Activated naive CD4-positive, alpha-beta T cell treated with anti-CD3 and anti-CD28 coated beads for 36 hours (primary cell): ENCODE measurements at regions of chr11 and their contacts with region 1.

Region 1: GRCh38 chr11:1652771-1653540 is 23.4 kb downstream of the KRTAP5-5 start:
- DNase-seq: peak; percentile 74
- H3K4me3 Mint-ChIP-seq: no peak overlapping the region
- H3K27ac Mint-ChIP-seq: no peak overlapping the region
- H3K4me1 Mint-ChIP-seq: no peaks in the 10 kb centered on the region
- H3K27me3 Mint-ChIP-seq: peaks cover 9% of the 10 kb centered on the region

Region 2: DNA sequence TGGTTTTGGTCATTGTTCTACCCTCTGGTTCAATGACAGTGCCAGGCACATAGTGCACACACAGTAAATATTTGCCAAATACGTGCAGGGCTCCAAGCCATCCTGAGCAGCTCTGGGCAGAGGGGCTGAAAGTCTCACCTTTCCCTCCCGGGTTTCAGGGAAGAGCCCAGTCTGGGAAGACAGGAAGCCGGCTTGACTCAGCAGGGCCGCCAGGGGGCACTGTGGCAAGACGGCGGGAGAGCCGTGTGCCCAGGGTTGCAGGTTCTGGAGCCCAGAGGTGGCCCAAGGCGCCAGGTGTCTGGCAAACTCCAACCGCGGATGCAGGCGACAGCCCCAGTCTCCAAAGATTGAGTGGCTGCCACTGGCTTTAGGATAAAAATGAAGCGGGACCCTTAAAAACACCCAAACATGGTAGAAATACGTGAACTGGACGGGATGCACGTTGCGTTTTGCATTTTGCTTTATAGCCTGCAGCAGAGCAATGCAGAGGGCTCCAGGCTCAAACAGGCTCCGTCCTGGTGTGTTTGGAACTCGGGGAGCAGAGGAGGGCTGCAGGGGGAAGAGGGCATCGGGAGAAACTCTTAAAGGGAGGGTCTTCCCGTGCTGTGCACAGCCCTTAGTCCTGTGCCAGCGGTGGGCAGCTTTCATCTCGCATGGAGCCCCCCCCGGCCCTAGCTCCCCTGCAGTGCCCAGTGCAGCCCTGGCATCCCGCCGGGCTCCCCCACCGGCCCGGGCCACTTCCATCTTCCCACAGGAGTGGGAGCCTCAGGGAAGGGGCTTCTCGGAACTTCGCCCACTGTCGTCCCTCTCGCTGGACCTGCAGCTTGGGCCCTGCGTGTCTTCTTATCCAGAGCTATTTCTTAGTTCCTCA is 12.6 kb before region 1 on chr11:
- CTCF ChIA-PET with region 1: interaction called, 12 read pairs
- intact Hi-C with region 1: no loop called
- DNase-seq: no peak
- H3K4me3 Mint-ChIP-seq: no peak overlapping the region
- H3K27ac Mint-ChIP-seq: no peak overlapping the region
- H3K4me1 Mint-ChIP-seq: no peaks in the 10 kb centered on the region
- H3K27me3 Mint-ChIP-seq: peaks cover 8% of the 10 kb centered on the region

Region 3: GRCh38 chr11:1682225-1682905 is 29.4 kb after region 1 on chr11:
- CTCF ChIA-PET with region 1: interaction called, 11 read pairs
- intact Hi-C with region 1: no loop called
- DNase-seq: no peak
- H3K4me3 Mint-ChIP-seq: no peak overlapping the region
- H3K27ac Mint-ChIP-seq: no peak overlapping the region
- H3K4me1 Mint-ChIP-seq: no peaks in the 10 kb centered on the region
- H3K27me3 Mint-ChIP-seq: peaks cover 7% of the 10 kb centered on the region

Region 4: DNA sequence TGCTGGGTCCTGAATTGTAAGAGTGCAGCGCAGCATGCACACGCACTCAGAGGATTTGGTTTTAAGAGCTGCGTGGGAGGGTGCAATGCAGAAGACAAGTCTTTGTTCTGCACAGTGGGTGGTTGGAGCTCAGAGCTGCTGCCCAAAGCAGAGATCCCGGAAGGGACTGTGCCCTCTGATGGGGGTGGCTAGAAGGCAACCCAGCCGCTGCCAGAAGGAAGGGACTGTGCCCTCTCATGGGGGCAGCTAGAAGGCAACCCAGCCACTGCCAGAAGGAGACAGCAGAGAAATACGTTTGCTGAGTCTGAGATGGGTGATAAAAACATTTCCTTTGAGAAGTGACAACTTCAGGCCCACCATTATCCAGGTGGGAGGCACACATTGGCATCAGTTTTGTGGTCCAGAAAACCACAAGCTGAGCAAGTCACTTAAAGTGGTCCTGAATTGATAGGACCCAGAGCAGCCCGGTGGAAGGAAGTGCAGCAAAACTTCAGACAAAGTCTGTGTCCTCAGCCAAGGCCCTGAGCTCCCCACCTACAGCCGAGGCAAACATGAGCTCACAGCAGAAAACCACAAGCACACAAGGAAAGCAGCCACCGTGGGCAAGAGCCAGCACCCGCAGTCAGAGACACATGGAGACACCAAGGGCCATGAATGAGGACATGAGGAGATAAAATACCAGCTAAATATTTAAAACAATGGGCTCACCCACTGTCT is 48.3 kb after region 1 on chr11:
- CTCF ChIA-PET with region 1: interaction called, 12 read pairs
- intact Hi-C with region 1: no loop called
- DNase-seq: no peak
- H3K4me3 Mint-ChIP-seq: no peak overlapping the region
- H3K27ac Mint-ChIP-seq: no peak overlapping the region
- H3K4me1 Mint-ChIP-seq: peaks cover 12% of the 10 kb centered on the region
- H3K27me3 Mint-ChIP-seq: no peaks in the 10 kb centered on the region

Region 5: DNA sequence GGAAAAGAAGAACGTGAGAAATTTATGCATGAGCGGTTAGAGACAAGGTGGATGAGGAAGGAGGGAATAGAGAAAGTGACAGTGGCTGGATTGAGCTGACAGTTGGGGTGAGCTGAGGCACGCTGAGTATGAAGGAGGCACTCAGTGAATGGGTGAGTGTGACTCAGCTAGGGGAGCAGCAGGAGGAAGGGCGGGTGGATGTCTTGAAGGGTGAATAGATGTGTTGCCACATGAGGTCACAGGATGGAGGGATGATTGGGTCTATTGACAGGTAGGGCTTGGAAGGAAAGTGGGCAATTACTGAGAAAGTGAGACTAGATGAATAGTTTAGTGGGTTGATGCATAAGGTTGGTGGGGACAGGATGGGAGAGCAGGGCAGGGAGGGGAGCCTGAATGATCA is 89.4 kb after region 1 on chr11:
- CTCF ChIA-PET with region 1: no interaction called
- intact Hi-C with region 1: no loop called
- DNase-seq: peak; percentile 10
- H3K4me3 Mint-ChIP-seq: no peak overlapping the region
- H3K27ac Mint-ChIP-seq: no peak overlapping the region
- H3K4me1 Mint-ChIP-seq: no peaks in the 10 kb centered on the region
- H3K27me3 Mint-ChIP-seq: no peaks in the 10 kb centered on the region

Region 6: DNA sequence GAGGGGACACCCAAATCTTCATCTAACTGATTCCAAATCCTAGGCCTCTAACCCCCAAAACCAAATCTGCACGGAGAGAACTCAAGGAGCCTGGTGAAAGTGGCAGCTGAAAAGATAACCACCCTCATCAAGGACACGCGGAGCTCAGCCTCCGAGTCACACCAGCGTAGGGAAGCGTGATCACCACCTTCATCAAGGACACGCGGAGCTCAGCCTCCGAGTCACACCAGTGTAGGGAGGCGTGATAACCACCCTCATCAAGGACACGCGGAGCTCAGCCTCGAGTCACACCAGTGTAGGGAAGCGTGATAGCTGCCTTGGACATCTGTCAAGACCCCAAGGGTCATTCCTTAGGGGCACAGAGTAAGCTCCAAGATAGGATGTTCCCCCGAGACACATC is 152.6 kb after region 1 on chr11:
- CTCF ChIA-PET with region 1: interaction called, 11 read pairs
- intact Hi-C with region 1: no loop called
- DNase-seq: no peak
- H3K4me3 Mint-ChIP-seq: no peak overlapping the region
- H3K27ac Mint-ChIP-seq: no peak overlapping the region
- H3K4me1 Mint-ChIP-seq: no peaks in the 10 kb centered on the region
- H3K27me3 Mint-ChIP-seq: peaks cover 2% of the 10 kb centered on the region

Region 7: GRCh38 chr11:1832211-1832919 is 179.4 kb after region 1 on chr11:
- CTCF ChIA-PET with region 1: interaction called, 53 read pairs
- intact Hi-C with region 1: loop called (anchors 1 kb)
- DNase-seq: peak; percentile 64
- H3K4me3 Mint-ChIP-seq: no peak overlapping the region
- H3K27ac Mint-ChIP-seq: no peak overlapping the region
- H3K4me1 Mint-ChIP-seq: no peaks in the 10 kb centered on the region
- H3K27me3 Mint-ChIP-seq: peaks cover 2% of the 10 kb centered on the region

Region 8: DNA sequence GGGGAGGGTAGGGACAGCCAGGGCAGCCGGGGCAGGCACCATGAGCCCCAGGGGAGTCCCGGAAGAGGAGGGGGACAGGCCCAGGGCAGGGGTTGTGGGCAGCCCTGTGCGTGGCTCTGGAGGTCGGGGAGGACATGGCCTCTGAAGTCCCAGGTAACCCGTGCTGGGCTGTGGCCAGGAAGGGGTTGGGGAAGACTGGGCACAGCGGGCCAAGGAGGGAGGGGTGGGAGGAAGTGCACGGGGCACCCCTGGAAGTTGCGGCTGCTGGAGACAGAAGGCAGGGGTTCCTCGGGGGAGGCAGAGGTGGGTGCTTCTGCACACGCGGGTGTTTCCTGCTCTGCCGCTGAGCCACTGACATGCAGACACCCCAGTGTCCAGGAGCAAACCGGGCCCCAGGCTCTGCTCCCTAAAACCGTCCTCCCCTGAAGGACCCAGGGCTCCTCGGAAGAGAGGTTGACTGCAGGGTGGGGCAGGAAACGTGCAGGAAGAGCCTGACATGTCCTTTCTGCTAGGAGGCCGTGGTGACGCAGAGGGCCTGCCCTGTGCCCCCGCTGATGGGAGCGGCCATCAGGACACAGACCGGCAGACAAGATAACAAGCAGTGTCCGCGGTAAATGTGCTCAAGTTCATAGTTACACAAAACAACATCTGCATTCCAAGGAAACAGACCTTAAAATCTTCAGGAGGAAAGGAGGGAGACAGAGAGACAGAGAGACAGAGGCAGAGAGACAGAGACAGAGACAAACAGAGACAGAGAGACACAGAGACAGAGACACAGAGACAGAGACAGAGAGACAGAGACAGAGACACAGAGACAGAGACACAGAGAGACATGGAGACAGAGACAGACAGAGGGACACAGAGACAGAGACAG is 191.5 kb after region 1 on chr11:
- CTCF ChIA-PET with region 1: no interaction called
- intact Hi-C with region 1: no loop called
- DNase-seq: peak; percentile 73
- H3K4me3 Mint-ChIP-seq: peak overlapping the region; percentile 52
- H3K27ac Mint-ChIP-seq: peak overlapping the region; percentile 66
- H3K4me1 Mint-ChIP-seq: peaks cover 58% of the 10 kb centered on the region
- H3K27me3 Mint-ChIP-seq: no peaks in the 10 kb centered on the region

Region 9: DNA sequence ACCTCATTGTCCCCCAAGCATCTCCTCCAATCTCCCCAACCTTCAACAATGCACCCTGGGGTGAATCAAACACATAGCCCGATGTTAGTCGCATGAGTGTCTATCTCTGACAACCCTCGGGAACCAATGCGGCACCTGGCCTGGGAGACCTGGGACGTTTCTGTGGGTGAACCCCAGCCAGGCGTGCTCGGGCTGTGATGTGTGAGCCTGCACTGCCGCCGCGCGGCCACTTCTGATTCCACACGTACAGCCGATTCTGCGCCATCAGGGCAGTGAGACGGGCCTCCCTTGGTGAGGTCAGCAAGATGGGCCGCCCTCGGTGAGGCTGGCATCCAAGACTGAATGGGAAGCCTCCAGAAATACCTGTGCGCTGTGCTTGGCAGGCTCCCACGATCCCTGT is 349.9 kb after region 1 on chr11:
- CTCF ChIA-PET with region 1: interaction called, 32 read pairs
- intact Hi-C with region 1: no loop called
- DNase-seq: no peak
- H3K4me3 Mint-ChIP-seq: no peak overlapping the region
- H3K27ac Mint-ChIP-seq: no peak overlapping the region
- H3K4me1 Mint-ChIP-seq: no peaks in the 10 kb centered on the region
- H3K27me3 Mint-ChIP-seq: no peaks in the 10 kb centered on the region

Region 10: GRCh38 chr11:2265396-2265795 is 612.4 kb after region 1 on chr11:
- CTCF ChIA-PET with region 1: no interaction called
- intact Hi-C with region 1: no loop called
- DNase-seq: peak; percentile 56
- H3K4me3 Mint-ChIP-seq: peak overlapping the region; percentile 22
- H3K27ac Mint-ChIP-seq: peak overlapping the region; percentile 27
- H3K4me1 Mint-ChIP-seq: peaks cover 23% of the 10 kb centered on the region
- H3K27me3 Mint-ChIP-seq: peaks cover 9% of the 10 kb centered on the region